K562 (cell line): ENCODE measurements at regions of chr7 and their contacts with region 1.

Region 1: DNA sequence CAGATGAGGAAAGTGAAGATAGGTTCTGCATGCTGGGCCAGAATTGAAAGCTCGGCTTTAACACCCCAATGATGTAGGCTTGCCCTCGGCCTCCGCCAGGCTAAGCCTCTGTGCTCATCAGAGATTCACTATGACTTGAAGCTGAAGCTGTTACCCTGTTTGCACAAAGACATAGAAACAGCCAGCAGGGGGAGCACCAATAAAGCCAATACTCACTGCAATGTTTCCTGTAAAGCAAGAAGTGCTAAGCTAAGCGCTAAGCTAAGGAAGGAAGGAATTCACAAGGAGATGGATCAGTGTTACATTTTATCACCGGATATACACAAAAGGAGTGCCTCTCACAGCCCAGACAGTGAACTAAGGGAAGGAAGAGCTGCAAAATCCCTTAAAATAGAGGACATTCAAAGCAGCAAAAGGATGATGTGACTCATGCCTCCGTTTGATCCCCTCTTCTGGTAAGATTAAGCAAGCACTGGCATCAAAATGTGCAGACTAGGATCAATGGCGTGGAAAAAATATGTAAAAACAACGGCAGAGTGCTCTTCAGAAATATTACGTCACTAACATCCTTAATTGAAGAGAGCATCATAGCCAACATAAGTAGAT is 153.8 kb downstream of the COBL start:
- DNase-seq: peak; percentile 39 to 81 (median 60)
- ATAC-seq: peak; percentile 96
- H3K4me3 ChIP-seq: no peak overlapping the region
- H3K27ac ChIP-seq: no peak overlapping the region
- H3K4me1 ChIP-seq: no peaks in the 10 kb centered on the region; a peak in 1 of 5 replicates
- H3K27me3 ChIP-seq: peaks cover 0 to 11% of the 10 kb centered on the region in 2 experiments; a peak in 2 of 5 replicates
- CTCF ChIP-seq: peak; percentile 82 to 86 (median 83)
- EP300 ChIP-seq: no peak
- POLR2A ChIP-seq: no peak
- RAD21 ChIP-seq: peak; percentile 80 to 92

Region 2: GRCh38 chr7:51366930-51367613 is 204.2 kb after region 1 on chr7:
- CTCF ChIA-PET with region 1: interaction called, 21 read pairs
- POLR2A ChIA-PET with region 1: interaction called, 3 read pairs
- in situ Hi-C with region 1: loop called (anchors 5 kb)
- intact Hi-C with region 1: loop called (anchors 1 kb)
- DNase-seq: peak; percentile 66 to 78 (median 66)
- ATAC-seq: peak; percentile 97
- H3K4me3 ChIP-seq: no peak overlapping the region
- H3K27ac ChIP-seq: no peak overlapping the region
- H3K4me1 ChIP-seq: no peaks in the 10 kb centered on the region; a peak in 2 of 5 replicates
- H3K27me3 ChIP-seq: peaks cover 0 to 10% of the 10 kb centered on the region in 2 experiments; a peak in 1 of 5 replicates
- CTCF ChIP-seq: peak; percentile 74 to 82 (median 80)
- EP300 ChIP-seq: no peak
- POLR2A ChIP-seq: no peak
- RAD21 ChIP-seq: peak; percentile 69 to 77

Region 3: DNA sequence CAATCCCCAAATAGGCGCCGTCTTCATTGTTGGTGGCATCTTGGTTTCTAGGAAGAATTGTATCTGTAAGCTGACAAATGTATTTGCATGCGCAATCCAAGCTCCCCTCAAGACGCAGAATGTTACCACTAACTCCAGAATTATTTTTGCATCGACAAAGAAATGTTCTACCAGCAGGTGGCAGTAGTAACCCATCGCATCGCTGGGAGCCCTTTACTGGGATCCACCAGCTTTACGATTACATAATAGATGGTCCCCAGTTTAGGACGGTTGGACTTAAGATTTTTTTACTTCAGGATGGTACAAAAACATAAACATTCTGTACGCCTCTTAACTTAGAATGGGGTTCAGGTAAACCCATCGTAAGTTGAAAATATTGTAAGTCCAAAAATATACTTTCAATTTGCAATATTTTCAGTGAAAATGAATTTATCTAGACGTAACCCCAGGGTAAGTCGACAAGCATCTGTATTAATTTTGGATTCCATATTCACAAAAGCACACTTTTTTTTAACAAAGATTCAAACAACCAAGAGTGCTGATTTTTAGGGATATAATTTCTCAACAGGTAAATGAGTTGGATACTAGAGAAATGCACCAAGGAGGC is 267.8 kb after region 1 on chr7:
- CTCF ChIA-PET with region 1: interaction called, 23 read pairs
- POLR2A ChIA-PET with region 1: interaction called, 3 read pairs
- in situ Hi-C with region 1: no loop called
- intact Hi-C with region 1: loop called (anchors 1 kb)
- DNase-seq: peak; percentile 67 to 78 (median 76)
- ATAC-seq: peak; percentile 76
- H3K4me3 ChIP-seq: no peak overlapping the region
- H3K27ac ChIP-seq: no peak overlapping the region
- H3K4me1 ChIP-seq: no peaks in the 10 kb centered on the region
- H3K27me3 ChIP-seq: peaks cover 0 to 8% of the 10 kb centered on the region in 2 experiments; a peak in 2 of 5 replicates
- CTCF ChIP-seq: peak; percentile 64 to 84 (median 70)
- EP300 ChIP-seq: no peak
- POLR2A ChIP-seq: no peak
- RAD21 ChIP-seq: peak; percentile 71 to 85